AG04450 (cell line): ENCODE measurements at regions of chr6 and their contacts with region 1.

Region 1: GRCh38 chr6:133568970-133569889 is 319.7 kb upstream of the TCF21 start:
- DNase-seq: peak; percentile 58
- H3K4me3 ChIP-seq: peak overlapping the region; percentile 41
- H3K27ac ChIP-seq: peak overlapping the region; percentile 71
- H3K27me3 ChIP-seq: no peaks in the 10 kb centered on the region
- CTCF ChIP-seq: peak; percentile 98

Region 2: DNA sequence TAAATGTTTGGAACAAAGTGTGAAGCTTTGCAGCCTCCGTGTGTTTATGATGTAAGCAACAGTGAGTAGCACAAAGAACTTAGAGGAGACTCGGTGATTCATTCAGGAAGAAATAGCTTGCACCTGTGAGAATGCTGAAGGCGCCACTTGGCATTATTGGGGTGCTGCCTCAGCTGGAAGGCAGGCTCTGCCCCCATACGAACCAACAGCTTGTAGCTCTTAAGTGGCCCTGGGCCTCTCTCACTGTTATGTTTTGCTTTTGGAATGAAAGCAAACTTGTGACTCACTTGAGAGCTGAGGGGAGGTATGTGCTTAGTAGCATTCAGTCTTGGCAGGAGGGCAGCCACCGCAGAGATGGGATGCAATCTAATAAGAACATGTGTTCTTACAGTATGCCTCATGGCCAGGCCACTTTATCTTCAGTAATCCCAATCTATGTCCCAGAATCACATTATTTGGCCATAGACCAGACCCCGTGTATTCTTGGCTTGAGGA is 17.3 kb before region 1 on chr6:
- CTCF ChIA-PET with region 1: interaction called, 10 read pairs
- POLR2A ChIA-PET with region 1: no interaction called
- DNase-seq: peak; percentile 99
- H3K4me3 ChIP-seq: no peak overlapping the region
- H3K27ac ChIP-seq: peak overlapping the region; percentile 94
- H3K27me3 ChIP-seq: no peaks in the 10 kb centered on the region
- CTCF ChIP-seq: no peak

Region 3: GRCh38 chr6:133595111-133595761 is 26.0 kb after region 1 on chr6:
- CTCF ChIA-PET with region 1: interaction called, 12 read pairs
- POLR2A ChIA-PET with region 1: interaction called, 6 read pairs
- DNase-seq: peak; percentile 45
- H3K4me3 ChIP-seq: no peak overlapping the region
- H3K27ac ChIP-seq: peak overlapping the region; percentile 49
- H3K27me3 ChIP-seq: no peaks in the 10 kb centered on the region
- CTCF ChIP-seq: no peak

Region 4: DNA sequence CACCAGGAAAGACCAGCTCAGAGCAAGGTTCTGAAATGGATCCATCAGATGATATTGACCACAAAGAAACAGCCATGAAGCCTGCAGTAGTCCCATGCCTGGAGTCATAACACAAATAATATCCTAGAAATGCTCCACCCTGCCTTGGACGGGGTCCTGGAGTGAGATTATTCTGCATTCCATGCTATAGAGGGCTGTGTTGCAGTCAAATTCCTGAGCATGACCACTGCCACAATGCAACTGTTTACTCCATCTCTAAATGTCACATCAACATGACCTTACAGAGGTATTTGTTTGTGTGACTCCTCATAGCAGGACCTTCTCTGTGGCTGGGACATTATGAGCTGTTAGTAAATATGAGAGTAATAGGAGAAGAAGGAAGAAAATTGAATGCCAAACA is 62.2 kb after region 1 on chr6:
- CTCF ChIA-PET with region 1: interaction called, 13 read pairs
- POLR2A ChIA-PET with region 1: interaction called, 3 read pairs
- DNase-seq: no peak
- H3K4me3 ChIP-seq: no peak overlapping the region
- H3K27ac ChIP-seq: no peak overlapping the region
- H3K27me3 ChIP-seq: no peaks in the 10 kb centered on the region
- CTCF ChIP-seq: peak; percentile 42

Region 5: GRCh38 chr6:133707456-133707855 is 138.2 kb after region 1 on chr6:
- CTCF ChIA-PET with region 1: interaction called, 13 read pairs
- POLR2A ChIA-PET with region 1: no interaction called
- DNase-seq: peak; percentile 79
- H3K4me3 ChIP-seq: no peak overlapping the region
- H3K27ac ChIP-seq: peak overlapping the region; percentile 68
- H3K27me3 ChIP-seq: no peaks in the 10 kb centered on the region
- CTCF ChIP-seq: no peak

Region 6: GRCh38 chr6:133916650-133917151 is 347.5 kb after region 1 on chr6:
- CTCF ChIA-PET with region 1: interaction called, 104 read pairs
- POLR2A ChIA-PET with region 1: interaction called, 4 read pairs
- DNase-seq: peak; percentile 89
- H3K4me3 ChIP-seq: no peak overlapping the region
- H3K27ac ChIP-seq: no peak overlapping the region
- H3K27me3 ChIP-seq: no peaks in the 10 kb centered on the region
- CTCF ChIP-seq: peak; percentile 97

Region 7: DNA sequence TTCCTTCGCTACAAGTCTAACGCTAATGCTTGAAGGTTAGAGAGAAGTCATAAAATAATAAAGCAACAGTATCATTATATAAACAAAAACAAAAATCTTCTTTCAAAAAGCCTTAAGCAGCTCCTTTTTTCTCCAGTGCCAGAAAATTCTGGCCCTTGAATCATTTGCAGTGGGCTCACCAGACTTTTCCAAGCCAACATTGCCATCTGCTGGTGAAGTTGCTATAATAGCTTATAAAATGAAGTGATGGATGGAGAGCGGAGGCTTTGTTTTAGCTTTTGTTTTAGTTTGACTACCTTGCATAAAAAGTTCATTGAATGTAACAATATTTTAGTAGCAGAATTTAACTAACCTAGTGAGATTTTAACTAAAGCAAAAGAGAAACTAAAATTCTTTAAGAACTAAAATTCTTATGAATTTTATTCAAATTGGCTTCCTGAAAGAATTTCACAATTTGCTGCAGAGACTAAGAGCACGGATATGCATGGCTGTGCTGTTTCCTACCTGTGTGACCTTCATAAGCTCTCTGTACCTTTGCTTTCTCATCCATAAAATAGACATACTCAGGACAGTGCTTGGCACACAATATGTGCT is 528.0 kb after region 1 on chr6:
- CTCF ChIA-PET with region 1: interaction called, 18 read pairs
- POLR2A ChIA-PET with region 1: no interaction called
- DNase-seq: peak; percentile 50
- H3K4me3 ChIP-seq: no peak overlapping the region
- H3K27ac ChIP-seq: no peak overlapping the region
- H3K27me3 ChIP-seq: no peaks in the 10 kb centered on the region
- CTCF ChIP-seq: peak; percentile 64